PC-9 (cell line): ENCODE measurements at regions of chr18 and their contacts with region 1.

Region 1: GRCh38 chr18:9683407-9684396 is 24.4 kb upstream of the RAB31 start:
- DNase-seq: peak; percentile 75 to 76
- H3K4me3 ChIP-seq: peak overlapping the region; percentile 15; the same call in 1 of the 2 replicates
- H3K27ac ChIP-seq: peak overlapping the region; percentile 56
- H3K4me1 ChIP-seq: peaks cover 32% of the 10 kb centered on the region
- H3K27me3 ChIP-seq: no peaks in the 10 kb centered on the region
- CTCF ChIP-seq: peak; percentile 62

Region 2: DNA sequence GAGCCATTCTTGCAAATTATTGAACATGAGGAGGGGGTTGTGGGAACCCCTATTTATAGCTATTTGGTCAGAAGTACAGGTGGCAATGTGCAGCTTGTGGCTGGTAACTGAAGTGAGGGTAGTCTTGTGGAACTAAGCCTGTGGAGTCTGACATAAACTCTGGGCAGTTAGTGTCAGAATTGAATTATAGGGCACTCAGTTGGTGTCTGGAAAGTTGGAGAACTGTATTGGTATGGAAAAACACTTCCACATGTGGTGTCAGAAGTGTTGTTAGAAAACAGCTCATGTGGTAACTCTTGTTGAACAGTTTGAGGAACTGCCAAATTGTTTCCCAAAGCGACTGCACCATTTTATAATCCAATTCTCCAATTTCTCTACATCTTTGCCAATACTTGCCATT is 200.9 kb before region 1 on chr18:
- CTCF ChIA-PET with region 1: no interaction called
- POLR2A ChIA-PET with region 1: no interaction called
- intact Hi-C with region 1: no loop called
- DNase-seq: no peak
- H3K4me3 ChIP-seq: no peak overlapping the region
- H3K27ac ChIP-seq: no peak overlapping the region
- H3K4me1 ChIP-seq: no peaks in the 10 kb centered on the region
- H3K27me3 ChIP-seq: no peaks in the 10 kb centered on the region
- CTCF ChIP-seq: no peak

Region 3: GRCh38 chr18:9561759-9562158 is 121.9 kb before region 1 on chr18:
- CTCF ChIA-PET with region 1: no interaction called
- POLR2A ChIA-PET with region 1: no interaction called
- intact Hi-C with region 1: no loop called
- DNase-seq: no peak
- H3K4me3 ChIP-seq: no peak overlapping the region
- H3K27ac ChIP-seq: no peak overlapping the region
- H3K4me1 ChIP-seq: no peaks in the 10 kb centered on the region
- H3K27me3 ChIP-seq: no peaks in the 10 kb centered on the region
- CTCF ChIP-seq: no peak

Region 4: DNA sequence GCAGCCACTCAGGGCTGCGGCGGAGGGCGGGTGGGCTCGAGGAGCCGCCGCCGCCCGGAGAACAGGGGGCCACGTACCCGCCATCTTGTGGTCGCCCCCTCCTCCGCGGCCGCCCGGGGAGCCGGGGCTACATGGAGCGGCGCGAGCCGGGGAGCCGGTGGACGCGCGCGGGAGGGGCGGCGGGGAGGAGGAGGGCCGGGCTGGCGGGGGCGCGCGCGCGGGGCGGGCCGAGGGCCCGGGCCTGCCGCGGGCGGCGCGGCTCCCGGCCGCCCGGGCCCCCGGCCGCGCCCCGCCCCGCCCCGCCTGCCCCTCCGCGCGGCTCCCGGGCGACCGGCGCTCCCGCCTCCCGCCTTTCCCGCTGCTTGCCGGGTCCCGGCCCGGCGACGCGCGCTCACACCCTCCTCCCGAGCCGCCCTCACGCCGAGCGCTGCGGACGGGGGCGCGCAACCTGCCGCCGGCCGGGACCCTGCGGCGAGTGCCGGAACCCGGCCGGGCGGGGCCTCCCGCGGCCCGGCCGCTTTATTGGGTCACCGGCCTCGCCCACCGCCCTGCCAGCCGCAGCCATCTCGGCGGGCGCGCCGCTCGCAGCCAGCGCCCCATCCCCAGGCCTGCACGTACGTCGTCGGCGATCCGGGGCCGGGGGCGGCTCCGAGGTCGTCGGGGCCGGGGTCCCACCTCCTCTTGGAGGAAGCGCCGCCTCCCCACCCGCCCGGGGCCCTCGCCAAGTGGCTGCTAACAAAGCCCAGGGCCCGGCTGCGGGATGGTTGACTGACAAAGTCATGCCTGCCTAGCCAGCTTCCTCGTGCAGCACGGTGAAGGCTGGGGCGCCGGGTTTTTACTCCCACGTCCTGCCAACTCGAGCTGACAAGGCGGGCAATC is 69.1 kb before region 1 on chr18 and contains the start of gene PPP4R1:
- CTCF ChIA-PET with region 1: interaction called, 11 read pairs
- POLR2A ChIA-PET with region 1: interaction called, 7 read pairs
- intact Hi-C with region 1: loop called (anchors 1 kb)
- DNase-seq: peak; percentile 56 to 80
- H3K4me3 ChIP-seq: peak within 1 kb of the TSS; percentile 94
- H3K27ac ChIP-seq: peak within 1 kb of the TSS; percentile 97
- H3K4me1 ChIP-seq: peaks cover 71% of the 10 kb centered on the region
- H3K27me3 ChIP-seq: no peaks in the 10 kb centered on the region
- CTCF ChIP-seq: no peak
- total RNA-seq, gene PPP4R1: 157 and 167 TPM in 2 replicates

Region 5: DNA sequence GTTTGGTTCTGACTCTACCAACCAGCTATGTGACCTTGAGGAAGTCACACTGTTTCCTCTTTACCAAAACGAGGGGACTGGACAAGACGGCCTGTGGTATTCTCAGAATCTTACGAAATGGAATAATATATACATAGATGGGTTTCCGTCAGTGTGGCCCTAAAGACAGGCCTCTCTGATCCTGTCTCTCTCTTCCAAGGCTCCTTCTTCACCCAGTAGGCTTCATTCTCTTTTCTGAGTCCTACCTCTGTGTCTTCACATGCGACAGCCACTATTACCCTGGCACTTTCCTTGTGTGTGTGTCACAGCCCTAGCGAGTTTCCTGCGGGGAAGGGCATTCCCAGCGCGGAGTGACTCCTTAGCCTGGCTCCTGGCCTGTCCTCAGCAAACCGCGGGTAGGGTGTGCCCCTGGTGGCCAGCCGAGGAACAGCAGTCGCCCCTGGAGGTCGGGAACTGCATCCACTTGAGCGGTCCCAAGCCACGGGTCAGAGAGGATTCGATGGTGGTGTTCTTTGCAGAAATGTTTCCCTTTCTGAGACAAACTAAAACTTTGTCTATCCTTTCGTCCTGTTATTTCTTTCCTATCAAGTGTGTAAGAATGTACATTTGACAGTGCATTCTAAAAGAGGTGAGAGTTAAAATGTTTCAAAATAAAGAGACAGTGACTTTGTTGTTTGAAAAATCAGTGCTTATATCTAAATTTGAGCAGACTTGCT is 87.7 kb after region 1 on chr18:
- CTCF ChIA-PET with region 1: no interaction called
- POLR2A ChIA-PET with region 1: no interaction called
- intact Hi-C with region 1: loop called (anchors 1 kb)
- DNase-seq: peak in 1 of 2 experiments; percentile 81
- H3K4me3 ChIP-seq: no peak overlapping the region
- H3K27ac ChIP-seq: no peak overlapping the region
- H3K4me1 ChIP-seq: peaks cover 12% of the 10 kb centered on the region
- H3K27me3 ChIP-seq: no peaks in the 10 kb centered on the region
- CTCF ChIP-seq: peak; percentile 69

Region 6: DNA sequence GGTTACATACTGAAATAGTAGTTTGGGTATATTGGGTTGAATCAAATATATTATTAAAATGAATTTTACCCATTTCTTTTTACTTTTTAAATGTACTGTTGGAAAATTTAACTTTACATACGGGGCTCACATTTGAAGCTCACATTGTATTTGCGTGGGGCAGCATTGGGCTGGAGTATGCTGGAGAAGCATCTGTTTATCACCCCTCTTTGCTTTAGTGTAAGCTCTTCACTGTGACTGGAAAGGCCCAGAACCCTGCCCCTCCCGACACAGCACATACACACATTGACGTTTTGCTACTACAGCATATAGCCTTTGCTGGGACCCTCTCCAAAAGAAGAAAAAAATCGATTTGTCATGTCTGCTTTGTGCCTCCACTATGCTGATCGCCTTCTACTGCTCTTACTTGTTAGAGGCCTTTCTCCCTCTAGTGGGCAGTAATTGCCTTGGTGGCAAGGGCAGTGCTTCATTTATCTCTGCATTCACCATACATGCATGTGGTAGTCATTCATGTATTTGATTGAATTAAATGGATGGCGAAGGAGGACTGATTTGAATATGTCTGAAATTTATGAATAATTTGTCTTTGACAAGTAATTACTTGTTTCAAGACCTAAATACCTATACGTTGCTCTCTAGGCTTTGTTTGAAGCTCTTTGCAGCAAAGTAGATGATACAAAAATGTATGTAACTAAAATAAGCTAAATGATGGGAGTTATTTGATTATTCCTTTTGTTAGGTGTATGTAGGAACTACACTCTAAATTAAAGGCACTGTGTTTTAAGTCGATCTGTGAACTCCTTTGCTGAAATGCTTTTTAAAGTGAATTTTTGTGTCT is 267.5 kb after region 1 on chr18:
- CTCF ChIA-PET with region 1: no interaction called
- POLR2A ChIA-PET with region 1: no interaction called
- intact Hi-C with region 1: loop called (anchors 1 kb)
- DNase-seq: peak; percentile 22 to 46
- H3K4me3 ChIP-seq: no peak overlapping the region
- H3K27ac ChIP-seq: 0 out of 2 replicates have a peak overlapping the region, but pooled peaks have one; percentile 20
- H3K4me1 ChIP-seq: no peaks in the 10 kb centered on the region; the same call in 1 of the 2 replicates
- H3K27me3 ChIP-seq: no peaks in the 10 kb centered on the region
- CTCF ChIP-seq: peak; percentile 73